ENCODE measurements at regions of chr11 and their contacts with region 1.

Region 1: GRCh38 chr11:66311965-66312548 is 4.8 kb downstream of the CD248 start:
- DNase-seq: peak; percentile 96
- H3K4me3 Mint-ChIP-seq: peak overlapping the region; percentile 92
- H3K27ac Mint-ChIP-seq: peak overlapping the region; percentile 93
- H3K4me1 Mint-ChIP-seq: peaks cover 33% of the 10 kb centered on the region
- H3K27me3 Mint-ChIP-seq: no peaks in the 10 kb centered on the region

Region 2: DNA sequence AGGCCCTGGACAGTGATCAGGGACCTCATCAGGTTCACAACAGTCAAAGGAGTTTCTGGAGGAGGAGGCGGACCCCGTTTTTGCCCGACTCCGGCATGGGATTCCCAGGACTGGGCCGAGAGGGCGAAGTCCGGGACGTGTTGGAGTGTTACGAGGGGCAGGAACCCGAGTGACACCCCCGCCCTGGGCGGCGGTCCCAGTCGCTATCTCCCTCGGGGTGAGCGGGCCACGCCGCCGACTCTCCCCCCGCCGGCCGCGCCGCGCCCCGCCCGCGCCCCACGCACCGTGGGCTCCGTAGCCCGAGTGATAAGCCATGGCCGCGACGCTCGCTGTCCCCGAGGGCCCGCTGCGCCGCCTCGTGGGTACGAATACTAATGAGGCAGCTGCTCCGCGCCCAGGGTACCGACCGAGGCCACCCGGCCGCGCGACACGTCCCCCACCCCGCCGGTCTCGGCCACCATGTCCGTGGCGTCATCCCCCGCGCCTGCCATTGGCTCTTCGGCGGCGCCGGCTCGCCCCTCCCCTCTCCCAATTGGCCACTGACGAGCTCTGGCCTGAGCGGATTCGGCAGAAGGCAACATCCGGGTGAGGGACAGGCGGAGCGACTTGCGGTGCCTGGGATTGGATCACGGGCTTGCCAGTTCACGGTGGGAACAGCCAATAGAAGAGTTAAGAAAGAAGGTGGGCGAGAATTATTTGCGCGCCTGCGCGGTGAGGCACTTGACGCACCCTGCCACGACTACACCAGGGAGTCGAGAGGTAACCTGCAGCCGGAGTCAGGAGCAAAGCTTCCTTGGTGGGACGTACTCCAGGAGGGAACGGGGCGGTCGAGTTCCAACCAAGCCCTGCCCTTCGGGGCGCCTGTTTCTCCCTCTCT is 23.1 kb before region 1 on chr11 and contains the start of gene YIF1A:
- CTCF ChIA-PET with region 1: interaction called, 3 read pairs
- intact Hi-C with region 1: loop called (anchors 1 kb)
- DNase-seq: peak; percentile 99
- H3K4me3 Mint-ChIP-seq: peak within 1 kb of the TSS; percentile 81
- H3K27ac Mint-ChIP-seq: peak within 1 kb of the TSS; percentile 70
- H3K4me1 Mint-ChIP-seq: peaks cover 35% of the 10 kb centered on the region
- H3K27me3 Mint-ChIP-seq: peaks cover 18% of the 10 kb centered on the region
- total RNA-seq, gene YIF1A: 45.9 to 49.7 TPM

Region 3: GRCh38 chr11:66328307-66329144 is 16.5 kb after region 1 on chr11:
- CTCF ChIA-PET with region 1: interaction called, 39 read pairs
- intact Hi-C with region 1: loop called (anchors 1 kb)
- DNase-seq: peak; percentile 90
- H3K4me3 Mint-ChIP-seq: peak overlapping the region; percentile 34
- H3K27ac Mint-ChIP-seq: peak overlapping the region; percentile 74
- H3K4me1 Mint-ChIP-seq: peaks cover 38% of the 10 kb centered on the region
- H3K27me3 Mint-ChIP-seq: no peaks in the 10 kb centered on the region

Region 4: GRCh38 chr11:66336234-66337102 is 24.4 kb after region 1 on chr11 and contains the start of gene RIN1:
- CTCF ChIA-PET with region 1: interaction called, 39 read pairs
- intact Hi-C with region 1: no loop called
- DNase-seq: peak; percentile 64
- H3K4me3 Mint-ChIP-seq: peak within 1 kb of the TSS; percentile 82
- H3K27ac Mint-ChIP-seq: peak within 1 kb of the TSS; percentile 63
- H3K4me1 Mint-ChIP-seq: peaks cover 20% of the 10 kb centered on the region
- H3K27me3 Mint-ChIP-seq: no peaks in the 10 kb centered on the region
- total RNA-seq, gene RIN1: 2.0 to 2.6 TPM

Region 5: DNA sequence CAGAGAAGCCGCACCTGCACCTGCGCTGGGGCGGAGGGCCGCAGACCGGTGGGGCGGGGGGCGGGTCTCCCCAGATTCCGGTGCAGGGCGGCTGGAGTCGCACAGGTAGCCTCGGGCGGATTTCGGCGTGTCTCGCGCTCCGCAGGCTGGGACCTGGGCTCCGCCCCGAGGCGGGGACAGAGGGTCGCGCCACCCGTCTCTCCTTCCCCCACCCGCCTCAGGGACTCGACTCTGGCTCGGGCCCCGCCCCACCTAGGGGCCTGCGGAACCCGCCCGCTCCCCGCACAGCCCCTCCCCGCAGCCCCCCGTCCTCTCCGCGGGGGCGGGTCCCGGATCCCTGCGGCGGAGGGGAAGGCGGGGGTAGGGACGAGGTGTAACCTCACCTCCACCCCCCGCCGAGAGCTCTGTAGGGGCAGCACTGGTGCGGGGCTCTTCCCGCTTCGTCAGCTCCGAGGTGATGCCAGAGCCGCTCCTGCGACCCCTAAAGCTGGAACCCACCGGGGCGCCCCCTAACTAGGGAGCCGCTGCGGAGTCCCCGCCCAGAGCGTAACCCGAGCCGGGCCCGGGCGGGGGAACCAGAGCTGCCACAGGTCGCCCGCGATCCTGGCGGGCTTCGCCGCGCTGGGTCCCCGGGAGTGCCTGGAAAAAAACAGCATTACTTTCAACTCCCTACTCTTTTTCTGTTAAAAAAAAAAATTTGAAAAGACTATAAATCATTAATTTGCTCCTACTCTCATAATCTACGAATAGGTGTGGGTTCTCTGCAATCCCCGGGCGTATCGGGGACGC is 59.8 kb after region 1 on chr11 and contains the start of gene SLC29A2:
- CTCF ChIA-PET with region 1: interaction called, 3 read pairs
- intact Hi-C with region 1: loop called (anchors 1 kb)
- DNase-seq: peak; percentile 80
- H3K4me3 Mint-ChIP-seq: peak within 1 kb of the TSS; percentile 83
- H3K27ac Mint-ChIP-seq: peak within 1 kb of the TSS; percentile 90
- H3K4me1 Mint-ChIP-seq: peaks cover 15% of the 10 kb centered on the region
- H3K27me3 Mint-ChIP-seq: no peaks in the 10 kb centered on the region
- total RNA-seq, gene SLC29A2: 6.6 to 7.4 TPM

Region 6: DNA sequence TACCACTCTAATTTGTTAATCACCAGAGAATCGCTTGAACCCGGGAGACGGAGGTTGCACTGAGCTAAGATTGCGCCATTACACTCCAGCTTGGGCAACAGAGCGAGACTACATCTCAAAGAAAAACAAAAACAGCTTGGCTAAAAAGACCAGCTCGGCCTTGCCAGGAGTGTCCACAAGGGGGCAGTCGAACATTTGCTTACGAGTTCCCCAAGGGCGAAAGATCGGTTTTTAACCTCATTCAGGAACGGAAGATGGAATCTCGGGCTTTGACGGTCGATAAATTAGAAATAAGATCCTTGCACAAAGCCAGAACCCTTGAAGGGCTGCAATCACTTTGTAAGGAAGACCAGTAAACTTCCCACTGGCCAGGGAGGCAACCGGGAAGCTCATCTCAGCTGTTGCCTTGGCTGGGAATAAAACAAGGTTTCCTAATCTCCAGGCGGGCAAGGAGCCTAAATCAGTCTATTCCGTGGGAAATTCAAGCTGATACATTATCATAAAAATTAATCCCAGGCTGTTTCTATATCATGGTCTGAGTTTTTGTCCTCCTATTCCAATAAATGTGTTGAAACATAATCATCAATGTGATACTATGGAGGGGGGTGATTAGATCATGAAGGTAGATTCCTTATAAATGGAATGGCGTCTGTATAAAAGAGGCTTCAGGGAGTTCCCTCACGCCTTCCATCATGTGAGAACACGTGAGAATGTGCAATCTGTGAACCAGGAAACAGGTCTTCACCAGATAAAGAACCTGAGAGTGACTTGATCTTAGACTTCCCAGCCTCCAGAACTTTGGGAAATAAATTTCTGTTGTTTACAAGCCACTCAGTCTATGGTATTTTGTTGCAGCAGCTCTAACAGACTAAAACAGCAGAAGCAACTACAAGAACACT is 74.4 kb after region 1 on chr11:
- CTCF ChIA-PET with region 1: interaction called, 85 read pairs
- intact Hi-C with region 1: loop called (anchors 1 kb)
- DNase-seq: peak; percentile 93
- H3K4me3 Mint-ChIP-seq: peak overlapping the region; percentile 17
- H3K27ac Mint-ChIP-seq: no peak overlapping the region
- H3K4me1 Mint-ChIP-seq: peaks cover 6% of the 10 kb centered on the region
- H3K27me3 Mint-ChIP-seq: no peaks in the 10 kb centered on the region